ENCODE measurements at regions of chr21 and their contacts with region 1.

Region 1: DNA sequence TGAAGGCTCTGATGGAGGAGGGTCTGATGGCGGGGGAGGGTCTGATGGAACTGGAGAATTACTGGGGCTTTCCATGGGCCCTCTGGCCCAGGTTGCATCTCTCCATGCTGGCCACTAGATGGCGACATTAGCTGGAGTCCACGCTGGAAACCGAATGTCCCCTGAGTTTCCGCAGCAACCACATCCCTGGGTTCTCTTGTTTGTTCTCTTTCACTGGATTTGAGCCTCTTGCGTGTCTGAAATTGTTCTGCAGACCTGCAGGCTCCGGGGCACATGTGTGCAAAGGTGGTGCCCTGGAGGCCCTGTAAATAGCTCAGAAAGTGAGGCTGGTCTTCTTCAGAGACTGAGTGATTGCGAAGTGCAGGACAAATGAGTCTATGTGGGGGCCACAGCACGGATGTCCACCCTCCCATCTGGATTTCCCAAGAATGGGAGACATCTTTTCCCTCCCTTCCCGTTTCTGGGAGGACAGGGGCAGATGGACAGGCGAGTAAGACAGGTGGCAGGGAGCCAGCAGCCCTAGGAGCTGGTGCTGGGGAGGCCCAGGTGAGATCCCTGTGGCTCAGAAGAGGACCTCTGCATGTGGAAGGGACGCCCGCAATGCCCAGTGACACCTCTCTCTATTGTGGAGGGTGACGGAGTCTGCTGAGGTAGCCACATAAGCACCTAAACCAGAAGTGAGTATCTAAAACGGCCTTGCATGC is 73.2 kb upstream of the ABCG1 start:
- DNase-seq: peak; percentile 33 to 64 (median 52)
- H3K4me3 ChIP-seq: no peak overlapping the region
- H3K27ac ChIP-seq: no peak overlapping the region
- H3K4me1 ChIP-seq: no peaks in the 10 kb centered on the region
- H3K27me3 ChIP-seq: no peaks in the 10 kb centered on the region
- CTCF ChIP-seq: peak; percentile 75 to 97 (median 77)
- EP300 ChIP-seq: no peak
- POLR2A ChIP-seq: no peak

Region 2: DNA sequence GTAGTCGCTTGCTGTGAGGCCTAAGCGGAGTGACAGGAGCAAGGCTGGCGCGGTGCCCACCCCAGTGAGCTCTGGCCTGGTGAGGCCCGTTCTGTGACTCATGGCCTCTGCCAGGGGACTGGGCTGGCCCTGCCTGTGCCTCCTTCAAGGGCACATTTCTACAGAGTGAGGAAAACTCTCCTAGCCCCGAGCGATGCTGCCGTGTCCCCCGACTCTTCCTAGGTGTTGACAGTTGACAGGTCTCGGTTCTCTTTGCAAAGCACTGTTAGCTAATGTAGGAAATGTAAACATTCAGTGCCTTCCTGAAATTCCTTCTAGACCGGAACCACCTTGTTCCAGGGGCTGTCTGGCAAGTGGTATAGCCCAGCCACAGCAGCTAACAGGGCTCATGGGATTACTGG is 117.1 kb after region 1 on chr21:
- intact Hi-C with region 1: loop called in 3 of 4 experiments (anchors 5 to 10 kb)
- DNase-seq: peak in 4 of 5 donors; percentile 31 to 57 (median 41)
- H3K4me3 ChIP-seq: no peak overlapping the region
- H3K27ac ChIP-seq: no peak overlapping the region
- H3K4me1 ChIP-seq: no peaks in the 10 kb centered on the region
- H3K27me3 ChIP-seq: no peaks in the 10 kb centered on the region
- CTCF ChIP-seq: no peak
- EP300 ChIP-seq: no peak
- POLR2A ChIP-seq: no peak

Region 3: GRCh38 chr21:42524349-42525151 is 378.8 kb after region 1 on chr21:
- intact Hi-C with region 1: loop called in 1 of 4 experiments (anchors 10 kb)
- DNase-seq: peak; percentile 76 to 85 (median 80)
- H3K4me3 ChIP-seq: peak overlapping the region; percentile 20
- H3K27ac ChIP-seq: peak overlapping the region; percentile 57 to 72
- H3K4me1 ChIP-seq: peaks cover 13% of the 10 kb centered on the region
- H3K27me3 ChIP-seq: no peaks in the 10 kb centered on the region
- CTCF ChIP-seq: no peak
- EP300 ChIP-seq: no peak
- POLR2A ChIP-seq: no peak